ENCODE measurements at regions of chrX and their contacts with region 1.

Region 1: DNA sequence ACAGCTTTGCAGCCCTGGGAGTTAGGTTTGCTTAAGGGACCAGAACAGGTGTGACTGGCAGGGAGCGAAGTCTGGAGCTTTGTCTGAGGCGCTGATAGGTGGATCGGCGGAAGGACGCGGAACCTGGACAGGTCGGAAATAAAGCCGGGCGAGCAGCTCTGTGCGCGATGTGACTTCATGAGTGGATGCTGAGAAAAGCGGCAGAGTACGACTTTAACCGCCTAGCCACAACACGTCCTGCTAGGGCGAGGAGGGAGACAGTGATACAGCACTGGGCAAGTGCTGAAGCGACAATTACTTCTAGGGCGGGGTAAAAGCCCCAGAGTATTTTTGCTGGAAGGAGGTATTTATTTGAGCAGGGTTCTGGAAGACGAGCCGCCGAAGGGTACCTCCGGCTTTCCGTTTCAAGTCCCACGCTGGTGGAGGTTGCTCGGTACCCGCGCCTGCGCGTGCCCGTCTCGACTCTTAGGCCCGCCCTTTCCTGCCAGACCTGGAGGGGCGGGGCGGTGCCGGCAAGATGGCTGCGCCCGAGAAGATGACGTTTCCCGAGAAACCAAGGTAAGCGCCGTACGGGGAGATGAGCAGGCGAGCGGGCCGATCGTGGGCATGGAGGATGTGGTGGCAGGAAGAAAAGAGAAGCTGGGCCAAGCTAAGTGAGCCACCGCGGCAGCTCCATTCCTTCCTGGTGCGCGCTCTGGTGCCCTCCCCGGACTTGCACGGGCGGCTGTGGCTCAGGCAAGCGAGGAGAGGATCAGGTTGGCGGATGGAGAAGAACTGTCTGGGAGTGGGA is at the start of gene ZRSR2:
- DNase-seq: peak; percentile 96
- H3K4me3 Mint-ChIP-seq: no peak within 1 kb of the TSS
- H3K27ac Mint-ChIP-seq: no peak within 1 kb of the TSS
- H3K4me1 Mint-ChIP-seq: peaks cover 9% of the 10 kb centered on the region
- H3K27me3 Mint-ChIP-seq: no peaks in the 10 kb centered on the region
- total RNA-seq, gene ZRSR2: 20.0 and 20.3 TPM in 2 replicates

Region 2: DNA sequence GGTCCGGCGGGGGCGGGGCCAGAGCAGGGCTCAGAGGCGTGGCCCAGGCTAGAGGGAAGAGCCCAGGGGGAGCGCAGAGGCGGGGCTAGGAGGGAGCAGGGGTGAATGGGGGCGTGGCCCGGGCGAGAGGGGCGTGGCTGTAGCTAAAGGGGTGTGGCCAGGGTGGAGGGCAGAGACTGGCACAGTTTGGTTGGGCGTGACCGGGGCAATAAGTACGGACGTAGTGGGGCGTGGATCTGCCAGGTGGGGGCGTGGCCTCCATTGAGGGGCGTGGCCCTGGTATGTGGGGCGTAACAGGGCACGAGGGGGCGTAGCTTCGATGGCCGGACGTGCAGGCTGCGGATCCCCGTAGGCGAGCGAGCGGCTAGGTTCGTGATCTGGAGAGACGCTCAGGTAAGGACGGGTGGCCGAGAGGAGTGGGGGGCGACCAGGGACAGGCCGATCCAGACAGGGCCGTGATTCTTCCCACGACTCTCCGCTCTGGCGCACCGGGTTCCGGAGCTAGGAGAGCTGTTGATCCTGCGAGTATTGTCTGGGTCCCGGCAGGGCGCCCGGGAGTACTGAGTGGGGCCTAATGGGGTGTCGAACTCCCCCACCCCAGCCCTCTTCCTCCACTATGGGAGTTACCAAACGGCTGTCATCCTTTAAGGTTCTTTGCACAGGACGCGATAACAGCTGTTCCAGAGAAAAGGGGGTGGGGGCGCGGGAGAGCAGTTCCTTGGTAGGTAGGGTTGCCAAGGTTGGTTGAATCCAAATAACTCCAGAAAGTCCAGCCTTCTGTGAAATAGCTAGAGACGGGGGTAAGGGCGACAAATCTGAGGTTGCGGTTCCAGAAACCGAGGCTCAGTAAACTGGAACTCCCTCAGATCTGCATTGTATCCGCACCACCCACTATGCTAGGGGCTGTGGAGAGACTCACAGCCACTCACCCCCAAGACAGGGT is 51.9 kb before region 1 on chrX and contains the start of gene CA5B:
- intact Hi-C with region 1: loop called (anchors 1 kb)
- DNase-seq: peak; percentile 99
- H3K4me3 Mint-ChIP-seq: peak within 1 kb of the TSS; percentile 90
- H3K27ac Mint-ChIP-seq: peak within 1 kb of the TSS; percentile 76
- H3K4me1 Mint-ChIP-seq: peaks cover 21% of the 10 kb centered on the region
- H3K27me3 Mint-ChIP-seq: no peaks in the 10 kb centered on the region
- total RNA-seq, gene CA5B: 4.7 and 5.9 TPM in 2 replicates

Region 3: DNA sequence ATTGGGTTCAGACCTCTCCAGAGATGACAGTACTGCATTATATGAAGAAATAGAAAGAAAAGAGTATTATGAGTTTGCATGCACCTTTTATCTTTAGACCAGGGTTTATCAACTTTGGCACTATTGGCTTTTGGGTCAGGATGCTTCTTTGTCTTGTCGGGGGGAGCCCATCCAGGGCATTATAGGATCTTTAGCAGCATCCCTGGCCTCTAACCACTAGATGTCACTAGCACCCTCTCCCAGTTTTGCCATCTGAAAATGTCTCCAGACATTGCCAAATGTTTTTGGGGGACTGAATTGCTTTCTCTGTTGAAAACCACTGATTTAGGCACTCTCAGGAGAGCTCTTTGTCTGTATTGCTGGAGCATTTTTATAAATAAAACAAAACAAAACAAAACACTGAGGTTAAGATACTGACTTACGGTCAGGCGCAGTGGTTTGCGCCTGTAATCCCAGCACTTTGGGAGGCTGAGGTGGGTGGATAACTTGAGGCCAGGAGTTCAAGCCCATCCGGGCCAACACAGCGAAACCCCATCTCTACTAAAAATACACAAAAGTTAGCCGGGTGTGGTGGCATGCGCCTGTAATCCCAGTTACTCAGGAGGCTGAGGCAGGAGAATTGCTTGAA is 28.5 kb before region 1 on chrX:
- intact Hi-C with region 1: loop called (anchors 1 kb)
- DNase-seq: peak; percentile 80
- H3K4me3 Mint-ChIP-seq: no peak overlapping the region
- H3K27ac Mint-ChIP-seq: no peak overlapping the region
- H3K4me1 Mint-ChIP-seq: peaks cover 16% of the 10 kb centered on the region
- H3K27me3 Mint-ChIP-seq: no peaks in the 10 kb centered on the region

Region 4: GRCh38 chrX:15815779-15816437 is 25.7 kb after region 1 on chrX:
- intact Hi-C with region 1: loop called (anchors 1 kb)
- DNase-seq: peak; percentile 76
- H3K4me3 Mint-ChIP-seq: no peak overlapping the region
- H3K27ac Mint-ChIP-seq: peak overlapping the region; percentile 52
- H3K4me1 Mint-ChIP-seq: peaks cover 36% of the 10 kb centered on the region
- H3K27me3 Mint-ChIP-seq: no peaks in the 10 kb centered on the region

Region 5: DNA sequence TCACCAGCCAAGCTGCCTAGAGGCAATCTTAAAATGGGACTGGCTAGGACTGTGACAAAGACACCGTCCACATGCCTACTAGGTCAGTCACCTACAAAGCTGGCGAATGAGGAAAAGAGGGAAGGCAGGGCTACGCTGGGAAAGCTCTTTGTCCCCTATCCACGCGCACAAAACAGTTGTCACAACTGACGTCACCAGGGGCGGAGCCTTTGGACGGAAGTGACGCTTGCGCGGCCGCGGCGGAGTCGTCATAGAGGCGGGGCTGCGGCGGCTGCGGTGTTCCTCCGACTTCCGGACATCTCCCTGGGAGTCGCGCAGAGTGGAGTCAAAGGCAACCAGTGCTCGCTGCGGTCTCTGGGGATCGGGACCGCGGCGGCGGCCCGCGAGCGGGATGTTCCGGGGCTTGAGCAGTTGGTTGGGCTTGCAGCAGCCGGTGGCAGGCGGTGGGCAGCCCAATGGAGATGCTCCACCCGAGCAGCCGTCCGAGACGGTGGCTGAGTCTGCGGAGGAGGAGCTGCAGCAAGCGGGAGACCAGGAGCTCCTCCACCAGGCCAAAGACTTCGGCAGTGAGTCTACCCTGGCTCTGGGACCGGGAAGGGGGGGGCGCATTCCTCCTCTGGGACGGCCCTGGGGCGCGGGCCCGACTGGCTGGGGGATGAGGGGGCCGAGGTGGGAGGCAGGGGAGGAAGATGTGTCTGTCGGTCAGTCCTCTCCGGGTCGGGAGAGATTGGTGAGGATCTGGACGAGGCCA is 929.3 kb after region 1 on chrX and contains the start of gene SYAP1:
- intact Hi-C with region 1: loop called (anchors 10 kb)
- DNase-seq: peak; percentile 98
- H3K4me3 Mint-ChIP-seq: peak within 1 kb of the TSS; percentile 94
- H3K27ac Mint-ChIP-seq: peak within 1 kb of the TSS; percentile 94
- H3K4me1 Mint-ChIP-seq: peaks cover 21% of the 10 kb centered on the region
- H3K27me3 Mint-ChIP-seq: no peaks in the 10 kb centered on the region
- total RNA-seq, gene SYAP1: 19.6 and 20.1 TPM in 2 replicates